ENCODE measurements at regions of chr12 and their contacts with region 1.

Region 1: DNA sequence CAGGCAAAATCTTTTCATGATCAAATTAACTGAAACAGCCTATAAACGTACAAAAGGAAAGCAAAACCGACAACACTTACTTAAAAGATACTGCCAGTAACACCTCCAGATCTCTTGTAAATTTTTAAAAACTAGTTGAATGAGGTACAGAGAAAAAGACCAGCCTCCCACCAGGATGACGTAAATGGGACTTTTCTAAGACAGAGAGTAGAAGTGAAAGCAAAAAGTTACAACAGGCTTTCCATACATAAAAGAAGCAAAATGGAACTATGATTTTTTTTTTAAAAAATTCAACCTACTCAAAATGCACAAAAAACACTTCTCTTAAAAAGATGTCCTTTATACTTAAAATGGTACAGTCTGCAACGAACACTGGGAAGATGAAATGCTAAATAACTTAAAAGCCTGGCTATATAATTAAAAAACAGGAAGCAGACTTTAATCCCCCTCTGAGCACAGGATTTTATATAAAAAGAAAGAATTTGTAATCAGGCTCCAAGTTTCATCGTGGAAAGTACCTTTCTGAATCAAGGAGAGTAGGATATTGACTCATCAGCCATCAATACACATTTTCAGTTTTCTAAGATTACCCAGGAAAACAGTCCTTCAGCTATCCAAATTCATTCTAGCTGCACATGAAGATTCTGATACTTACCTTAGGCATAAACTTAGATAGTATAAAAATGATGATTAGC is 14.2 kb upstream of the MYO1A start:
- DNase-seq: no peak
- H3K4me3 ChIP-seq: no peak overlapping the region
- CTCF ChIP-seq: no peak

Region 2: GRCh38 chr12:55973598-55974307 is 1090.4 kb before region 1 on chr12 and contains the start of gene RAB5B:
- CTCF ChIA-PET with region 1: no interaction called
- POLR2A ChIA-PET with region 1: no interaction called
- DNase-seq: peak; percentile 100
- H3K4me3 ChIP-seq: peak within 1 kb of the TSS; percentile 97
- CTCF ChIP-seq: no peak

Region 3: GRCh38 chr12:56759263-56759908 is 304.8 kb before region 1 on chr12:
- CTCF ChIA-PET with region 1: interaction called, 58 read pairs
- POLR2A ChIA-PET with region 1: no interaction called
- DNase-seq: no peak
- H3K4me3 ChIP-seq: no peak overlapping the region
- CTCF ChIP-seq: no peak

Region 4: GRCh38 chr12:57011438-57012424 is 52.4 kb before region 1 on chr12:
- CTCF ChIA-PET with region 1: interaction called, 500 read pairs
- POLR2A ChIA-PET with region 1: no interaction called
- DNase-seq: no peak
- H3K4me3 ChIP-seq: no peak overlapping the region
- CTCF ChIP-seq: no peak

Region 5: GRCh38 chr12:57031138-57031725 is 32.9 kb before region 1 on chr12:
- CTCF ChIA-PET with region 1: interaction called, 14 read pairs
- POLR2A ChIA-PET with region 1: no interaction called
- DNase-seq: no peak
- H3K4me3 ChIP-seq: no peak overlapping the region
- CTCF ChIP-seq: no peak

Region 6: DNA sequence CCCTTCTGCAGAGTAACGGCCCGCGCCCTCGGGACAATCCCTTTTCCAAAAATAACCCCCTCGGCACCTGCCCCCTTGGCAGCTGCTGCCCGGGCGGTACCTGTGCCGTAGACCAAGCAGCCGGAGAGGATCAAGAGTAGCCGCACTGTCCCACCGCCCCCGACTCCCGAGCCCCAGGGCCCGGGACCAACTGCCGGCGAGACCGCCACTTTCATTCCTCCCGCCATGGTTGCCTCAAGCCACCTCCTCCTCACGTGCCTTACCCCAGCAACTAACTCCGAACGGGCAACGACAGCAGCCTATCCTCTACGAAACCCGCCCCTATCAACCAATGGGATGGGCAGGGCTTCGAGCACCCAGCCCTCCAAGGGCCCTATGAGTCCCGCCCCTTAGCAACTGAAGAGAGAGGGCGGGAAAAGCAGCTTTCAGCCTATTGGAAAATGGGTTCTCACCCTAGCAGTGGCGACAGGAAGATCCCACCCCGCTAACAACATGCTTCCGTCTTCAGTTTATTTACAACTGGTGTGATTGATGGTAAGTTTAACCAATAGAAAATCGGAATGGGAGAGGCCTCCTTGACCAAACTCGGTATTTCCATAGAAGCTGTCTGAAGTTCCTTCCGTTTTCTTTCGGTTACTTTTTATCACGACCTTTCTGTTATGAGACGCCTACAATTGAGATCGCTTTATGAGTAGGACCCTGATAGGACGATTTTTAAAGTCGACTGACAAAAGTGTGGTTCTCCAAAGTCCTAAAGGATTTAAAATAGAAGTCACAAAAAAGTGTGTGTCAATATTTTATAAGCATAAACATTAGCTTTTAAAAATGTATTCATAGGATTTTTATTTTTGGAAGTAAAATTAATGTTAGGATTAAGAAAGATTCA is 14.6 kb after region 1 on chr12 and contains the start of gene NEMP1:
- CTCF ChIA-PET with region 1: interaction called, 95 read pairs
- POLR2A ChIA-PET with region 1: no interaction called
- DNase-seq: peak; percentile 100
- H3K4me3 ChIP-seq: peak within 1 kb of the TSS; percentile 77
- CTCF ChIP-seq: no peak

Region 7: DNA sequence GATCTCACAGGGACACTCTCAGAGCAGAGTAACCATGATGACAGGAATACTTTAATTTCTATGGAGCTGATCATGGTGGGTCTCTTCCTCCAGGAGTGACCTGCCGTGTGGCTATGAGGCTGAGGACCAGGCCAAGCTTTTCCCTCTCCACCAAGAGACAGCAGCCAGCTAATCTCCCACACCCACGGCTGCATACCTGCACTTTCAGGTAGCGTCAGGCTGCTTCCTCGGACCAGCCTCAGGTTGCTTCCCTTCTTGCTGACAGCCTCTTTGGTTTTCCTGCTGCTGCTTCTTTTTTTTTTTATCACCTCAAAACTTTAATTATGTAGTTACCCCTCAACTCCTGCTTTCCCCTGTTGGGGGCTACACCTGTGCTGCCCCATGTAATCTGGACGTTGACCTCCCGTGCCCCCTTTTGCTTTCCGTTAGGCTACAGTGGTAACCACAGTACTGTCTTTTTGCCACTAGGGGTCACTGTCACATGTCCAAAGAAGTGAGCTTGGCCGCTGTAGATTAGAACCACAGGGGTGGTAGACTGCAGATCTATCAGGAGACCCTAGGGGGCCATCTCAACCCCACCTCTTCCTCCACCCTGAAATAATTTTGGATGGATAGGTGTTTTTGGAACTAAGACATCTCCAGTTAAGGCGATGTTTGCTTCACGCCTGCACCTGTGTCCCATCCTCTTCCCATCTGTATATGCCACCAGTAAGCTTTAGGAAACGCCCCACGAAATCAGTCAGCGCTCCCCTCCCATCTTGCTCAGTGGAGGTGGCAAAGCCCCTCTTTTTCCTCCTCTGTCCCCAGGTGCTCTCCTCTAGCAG is 519.1 kb after region 1 on chr12:
- CTCF ChIA-PET with region 1: no interaction called
- POLR2A ChIA-PET with region 1: no interaction called
- DNase-seq: no peak
- H3K4me3 ChIP-seq: no peak overlapping the region
- CTCF ChIP-seq: peak; percentile 85